Right ventricle myocardium inferior (tissue), 1 donor: ENCODE measurements at regions of chr15 and their contacts with region 1.

Region 1: DNA sequence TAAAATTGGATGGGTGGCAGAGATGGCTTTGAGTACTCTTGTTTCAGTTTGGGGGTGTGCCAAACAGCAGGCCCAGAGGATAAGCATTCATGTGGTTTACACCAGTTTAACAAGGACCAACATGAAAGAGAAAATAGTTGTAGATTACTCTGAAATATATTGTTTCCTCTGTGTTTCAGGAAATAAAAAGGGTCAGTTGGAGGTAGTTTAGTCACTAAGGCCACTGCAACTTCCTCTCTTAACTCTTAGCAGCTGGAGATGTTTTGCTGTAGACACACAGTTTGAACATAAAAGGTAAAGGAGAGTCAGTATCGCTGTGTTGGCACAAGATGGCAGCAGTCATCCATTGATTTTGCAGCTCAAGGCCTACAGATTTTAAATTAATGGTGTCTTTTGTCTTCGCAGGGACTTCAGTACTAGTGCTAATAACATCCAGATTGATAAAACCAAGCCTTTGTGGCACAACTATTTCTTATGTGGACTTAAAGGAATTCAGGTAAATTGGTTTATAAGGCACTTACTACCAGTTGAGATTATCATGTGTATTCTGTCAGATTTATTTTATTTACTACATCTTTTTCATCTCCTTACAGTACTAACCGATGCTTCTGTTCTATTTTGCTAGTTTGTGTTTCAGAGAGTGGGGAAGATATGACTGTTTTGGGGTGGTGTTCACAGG is 65.5 kb downstream of the GALK2 start:
- DNase-seq: no peak
- ATAC-seq: peak; percentile 85

Region 2: DNA sequence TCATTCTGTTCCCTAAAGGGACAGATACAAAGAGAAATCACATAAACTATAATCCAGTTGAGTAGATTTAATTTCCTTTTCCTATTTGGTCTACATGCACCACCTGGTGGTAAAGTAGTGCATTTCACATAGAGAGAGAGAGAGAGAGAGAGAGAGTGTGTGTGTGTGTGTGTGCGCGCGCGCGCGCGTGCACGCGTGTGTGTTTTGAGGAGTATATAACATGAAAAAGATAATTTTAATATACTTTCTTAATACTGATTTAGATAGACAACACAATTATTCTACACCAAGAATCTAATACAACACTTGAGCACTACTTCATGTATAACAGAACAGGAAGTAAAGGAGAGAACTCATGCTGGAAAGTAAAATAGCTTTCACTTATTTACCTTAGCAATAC is 186.4 kb after region 1 on chr15:
- intact Hi-C with region 1: loop called (anchors 1 kb)
- DNase-seq: peak; percentile 82
- ATAC-seq: peak; percentile 68

Region 3: GRCh38 chr15:49610161-49610918 is 374.8 kb after region 1 on chr15:
- intact Hi-C with region 1: loop called (anchors 10 kb)
- DNase-seq: no peak
- ATAC-seq: no peak

Region 4: GRCh38 chr15:50051803-50052419 is 816.3 kb after region 1 on chr15:
- intact Hi-C with region 1: loop called (anchors 5 kb)
- DNase-seq: no peak
- ATAC-seq: no peak

Region 5: GRCh38 chr15:50145451-50145872 is 909.9 kb after region 1 on chr15:
- intact Hi-C with region 1: loop called (anchors 5 kb)
- DNase-seq: no peak
- ATAC-seq: peak; percentile 79